Aorta (tissue), 5 donors: ENCODE measurements at regions of chr20 and their contacts with region 1.

Region 1: GRCh38 chr20:22333885-22334545 is 250.4 kb downstream of the FOXA2 start:
- DNase-seq: peak; percentile 62 to 80
- ATAC-seq: peak; percentile 80
- H3K4me3 ChIP-seq: no peak overlapping the region
- H3K27ac ChIP-seq: no peak overlapping the region
- H3K4me1 ChIP-seq: no peaks in the 10 kb centered on the region
- H3K27me3 ChIP-seq: no peaks in the 10 kb centered on the region

Region 2: GRCh38 chr20:22630701-22631100 is 296.7 kb after region 1 on chr20:
- intact Hi-C with region 1: loop called in 1 of 2 experiments (anchors 5 kb)
- DNase-seq: no peak
- ATAC-seq: no peak
- H3K4me3 ChIP-seq: no peak overlapping the region
- H3K27ac ChIP-seq: no peak overlapping the region
- H3K4me1 ChIP-seq: no peaks in the 10 kb centered on the region
- H3K27me3 ChIP-seq: peaks cover 0 to 2% of the 10 kb centered on the region in 2 donors

Region 3: GRCh38 chr20:23655491-23656211 is 1321.6 kb after region 1 on chr20:
- intact Hi-C with region 1: loop called in 1 of 2 experiments (anchors 5 kb)
- DNase-seq: peak in 1 of 2 donors; percentile 90
- ATAC-seq: peak; percentile 76
- H3K4me3 ChIP-seq: no peak overlapping the region
- H3K27ac ChIP-seq: no peak overlapping the region
- H3K4me1 ChIP-seq: no peaks in the 10 kb centered on the region
- H3K27me3 ChIP-seq: no peaks in the 10 kb centered on the region